Caco-2 (cell line): ENCODE measurements at regions of chr14 and their contacts with region 1.

Region 1: DNA sequence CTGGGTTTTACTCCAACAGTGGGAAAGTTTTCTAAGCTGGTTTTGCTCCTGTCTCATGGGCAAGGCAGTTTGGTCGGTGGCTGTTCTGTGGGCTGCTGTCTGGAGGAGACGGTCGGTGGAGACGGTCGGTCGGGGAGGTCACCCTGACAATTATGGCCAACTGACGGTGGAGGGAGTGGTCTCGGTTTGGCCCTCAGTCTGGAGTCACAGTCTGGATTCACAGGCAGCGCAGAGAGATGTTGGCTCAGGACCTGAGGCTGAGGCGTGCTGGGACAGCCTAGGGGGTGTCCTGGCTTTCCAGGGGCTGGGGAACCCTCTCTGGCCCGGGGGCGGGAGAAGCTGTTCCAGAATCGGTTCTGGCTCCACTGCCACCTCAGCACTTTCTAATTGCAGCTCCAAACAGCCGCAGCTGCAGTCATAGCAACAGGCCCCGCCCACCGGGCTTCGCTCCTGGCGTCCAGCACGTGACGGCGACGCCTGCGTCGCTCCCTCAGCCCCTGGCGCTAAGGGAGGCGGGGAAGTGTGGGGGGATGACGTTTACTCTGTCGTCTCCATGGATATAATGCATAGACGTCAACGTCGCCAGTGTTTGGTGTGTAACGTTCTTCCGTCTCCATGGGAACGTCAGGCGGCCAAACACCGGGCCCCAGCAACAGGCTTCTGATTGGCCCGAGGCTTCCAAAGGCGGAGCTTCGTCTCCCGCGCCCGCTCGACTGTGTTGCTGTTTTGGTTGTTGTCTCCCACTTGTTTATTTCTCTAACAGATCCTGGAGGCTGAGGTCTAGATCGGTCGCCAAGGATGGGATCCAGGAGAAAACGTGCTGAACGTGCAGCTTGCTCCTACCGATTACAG is 19.8 kb upstream of the FOS start:
- DNase-seq: peak; percentile 99
- H3K4me3 ChIP-seq: peak overlapping the region; percentile 57
- H3K4me3 Mint-ChIP-seq: peak overlapping the region; percentile 93
- H3K27ac Mint-ChIP-seq: peak overlapping the region; percentile 100
- H3K4me1 ChIP-seq: peaks cover 12% of the 10 kb centered on the region
- H3K4me1 Mint-ChIP-seq: peaks cover 8% of the 10 kb centered on the region
- H3K27me3 ChIP-seq: no peaks in the 10 kb centered on the region
- H3K27me3 Mint-ChIP-seq: no peaks in the 10 kb centered on the region
- CTCF ChIP-seq: no peak

Region 2: GRCh38 chr14:74867673-74868072 is 391.2 kb before region 1 on chr14:
- CTCF ChIA-PET with region 1: no interaction called
- POLR2A ChIA-PET with region 1: no interaction called
- intact Hi-C with region 1: no loop called
- DNase-seq: no peak
- H3K4me3 ChIP-seq: no peak overlapping the region
- H3K4me3 Mint-ChIP-seq: no peak overlapping the region
- H3K27ac Mint-ChIP-seq: no peak overlapping the region
- H3K4me1 ChIP-seq: no peaks in the 10 kb centered on the region
- H3K4me1 Mint-ChIP-seq: no peaks in the 10 kb centered on the region
- H3K27me3 ChIP-seq: no peaks in the 10 kb centered on the region; the same call in 1 of the 2 replicates
- H3K27me3 Mint-ChIP-seq: peaks cover 14% of the 10 kb centered on the region
- CTCF ChIP-seq: no peak

Region 3: DNA sequence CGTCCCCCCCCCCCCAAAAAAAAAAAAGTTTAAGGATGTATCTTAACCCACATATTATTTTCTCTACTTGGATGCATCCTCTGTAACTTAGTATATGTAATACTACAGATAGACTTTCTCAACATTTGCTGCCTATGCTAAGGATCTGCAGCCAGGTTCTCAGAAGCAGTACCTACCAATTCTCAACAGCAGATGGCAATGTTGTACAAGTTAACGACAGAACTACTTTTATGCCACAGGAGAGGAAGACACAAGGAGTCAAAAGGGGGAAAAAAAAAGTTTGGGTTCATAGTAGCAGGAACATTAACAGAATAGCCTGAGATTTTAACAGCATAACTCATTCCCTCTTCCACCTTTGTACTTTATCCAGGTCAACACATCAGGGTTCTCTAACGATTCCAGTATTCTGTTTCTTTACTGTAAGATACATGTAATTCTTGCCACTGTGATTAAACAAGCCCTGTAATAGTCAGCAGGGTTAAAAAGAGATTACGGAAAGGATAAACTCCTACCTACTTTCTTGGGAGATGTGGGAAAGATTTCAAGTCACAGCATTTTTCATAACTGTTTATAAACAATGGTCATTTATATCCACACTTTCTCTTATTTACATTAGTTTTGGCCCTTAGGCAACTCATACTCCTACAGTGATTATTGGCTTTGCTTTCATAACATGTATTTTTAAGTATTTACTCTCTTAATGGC is 126.3 kb before region 1 on chr14:
- CTCF ChIA-PET with region 1: no interaction called
- POLR2A ChIA-PET with region 1: no interaction called
- intact Hi-C with region 1: loop called (anchors 1 kb)
- DNase-seq: peak; percentile 62 to 80
- H3K4me3 ChIP-seq: no peak overlapping the region
- H3K4me3 Mint-ChIP-seq: no peak overlapping the region
- H3K27ac Mint-ChIP-seq: peak overlapping the region; percentile 51
- H3K4me1 ChIP-seq: 0 out of 2 replicates have a peak, but pooled peaks cover 7% of the 10 kb centered on the region
- H3K4me1 Mint-ChIP-seq: no peaks in the 10 kb centered on the region
- H3K27me3 ChIP-seq: no peaks in the 10 kb centered on the region
- H3K27me3 Mint-ChIP-seq: no peaks in the 10 kb centered on the region
- CTCF ChIP-seq: peak; percentile 62 to 75

Region 4: GRCh38 chr14:75182841-75183624 is 75.8 kb before region 1 on chr14:
- CTCF ChIA-PET with region 1: interaction called, 3 read pairs
- POLR2A ChIA-PET with region 1: interaction called, 12 read pairs
- intact Hi-C with region 1: loop called (anchors 2 kb)
- DNase-seq: peak; percentile 68 to 69
- H3K4me3 ChIP-seq: no peak overlapping the region
- H3K4me3 Mint-ChIP-seq: peak overlapping the region; percentile 27
- H3K27ac Mint-ChIP-seq: peak overlapping the region; percentile 81
- H3K4me1 ChIP-seq: peaks cover 32% of the 10 kb centered on the region
- H3K4me1 Mint-ChIP-seq: peaks cover 14% of the 10 kb centered on the region
- H3K27me3 ChIP-seq: no peaks in the 10 kb centered on the region
- H3K27me3 Mint-ChIP-seq: no peaks in the 10 kb centered on the region
- CTCF ChIP-seq: no peak

Region 5: GRCh38 chr14:75230140-75231045 is 28.4 kb before region 1 on chr14:
- CTCF ChIA-PET with region 1: no interaction called
- POLR2A ChIA-PET with region 1: interaction called, 5 read pairs
- intact Hi-C with region 1: loop called (anchors 2 kb)
- DNase-seq: no peak
- H3K4me3 ChIP-seq: no peak overlapping the region
- H3K4me3 Mint-ChIP-seq: no peak overlapping the region
- H3K27ac Mint-ChIP-seq: peak overlapping the region; percentile 9
- H3K4me1 ChIP-seq: peaks cover 33% of the 10 kb centered on the region
- H3K4me1 Mint-ChIP-seq: peaks cover 36% of the 10 kb centered on the region
- H3K27me3 ChIP-seq: no peaks in the 10 kb centered on the region
- H3K27me3 Mint-ChIP-seq: no peaks in the 10 kb centered on the region
- CTCF ChIP-seq: peak in 1 of 2 experiments; percentile 22

Region 6: GRCh38 chr14:75238756-75239455 is 19.9 kb before region 1 on chr14:
- CTCF ChIA-PET with region 1: interaction called, 12 read pairs
- POLR2A ChIA-PET with region 1: interaction called, 5 read pairs
- intact Hi-C with region 1: loop called (anchors 2 kb)
- DNase-seq: no peak
- H3K4me3 ChIP-seq: no peak overlapping the region
- H3K4me3 Mint-ChIP-seq: no peak overlapping the region
- H3K27ac Mint-ChIP-seq: no peak overlapping the region
- H3K4me1 ChIP-seq: peaks cover 5% of the 10 kb centered on the region
- H3K4me1 Mint-ChIP-seq: peaks cover 15% of the 10 kb centered on the region
- H3K27me3 ChIP-seq: no peaks in the 10 kb centered on the region
- H3K27me3 Mint-ChIP-seq: no peaks in the 10 kb centered on the region
- CTCF ChIP-seq: no peak

Region 7: DNA sequence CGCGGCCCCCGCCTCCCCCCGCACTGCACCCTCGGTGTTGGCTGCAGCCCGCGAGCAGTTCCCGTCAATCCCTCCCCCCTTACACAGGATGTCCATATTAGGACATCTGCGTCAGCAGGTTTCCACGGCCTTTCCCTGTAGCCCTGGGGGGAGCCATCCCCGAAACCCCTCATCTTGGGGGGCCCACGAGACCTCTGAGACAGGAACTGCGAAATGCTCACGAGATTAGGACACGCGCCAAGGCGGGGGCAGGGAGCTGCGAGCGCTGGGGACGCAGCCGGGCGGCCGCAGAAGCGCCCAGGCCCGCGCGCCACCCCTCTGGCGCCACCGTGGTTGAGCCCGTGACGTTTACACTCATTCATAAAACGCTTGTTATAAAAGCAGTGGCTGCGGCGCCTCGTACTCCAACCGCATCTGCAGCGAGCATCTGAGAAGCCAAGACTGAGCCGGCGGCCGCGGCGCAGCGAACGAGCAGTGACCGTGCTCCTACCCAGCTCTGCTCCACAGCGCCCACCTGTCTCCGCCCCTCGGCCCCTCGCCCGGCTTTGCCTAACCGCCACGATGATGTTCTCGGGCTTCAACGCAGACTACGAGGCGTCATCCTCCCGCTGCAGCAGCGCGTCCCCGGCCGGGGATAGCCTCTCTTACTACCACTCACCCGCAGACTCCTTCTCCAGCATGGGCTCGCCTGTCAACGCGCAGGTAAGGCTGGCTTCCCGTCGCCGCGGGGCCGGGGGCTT is 19.8 kb after region 1 on chr14 and contains the start of gene FOS:
- CTCF ChIA-PET with region 1: interaction called, 6 read pairs
- POLR2A ChIA-PET with region 1: interaction called, 22 read pairs
- intact Hi-C with region 1: loop called (anchors 1 kb)
- DNase-seq: peak; percentile 92 to 95
- H3K4me3 ChIP-seq: peak within 1 kb of the TSS; percentile 96
- H3K4me3 Mint-ChIP-seq: peak within 1 kb of the TSS; percentile 89
- H3K27ac Mint-ChIP-seq: peak within 1 kb of the TSS; percentile 99
- H3K4me1 ChIP-seq: peaks cover 23% of the 10 kb centered on the region
- H3K4me1 Mint-ChIP-seq: peaks cover 14% of the 10 kb centered on the region
- H3K27me3 ChIP-seq: no peaks in the 10 kb centered on the region
- H3K27me3 Mint-ChIP-seq: no peaks in the 10 kb centered on the region
- CTCF ChIP-seq: no peak
- total RNA-seq, gene FOS: 72.7 and 73.7 TPM in 2 replicates

Region 8: DNA sequence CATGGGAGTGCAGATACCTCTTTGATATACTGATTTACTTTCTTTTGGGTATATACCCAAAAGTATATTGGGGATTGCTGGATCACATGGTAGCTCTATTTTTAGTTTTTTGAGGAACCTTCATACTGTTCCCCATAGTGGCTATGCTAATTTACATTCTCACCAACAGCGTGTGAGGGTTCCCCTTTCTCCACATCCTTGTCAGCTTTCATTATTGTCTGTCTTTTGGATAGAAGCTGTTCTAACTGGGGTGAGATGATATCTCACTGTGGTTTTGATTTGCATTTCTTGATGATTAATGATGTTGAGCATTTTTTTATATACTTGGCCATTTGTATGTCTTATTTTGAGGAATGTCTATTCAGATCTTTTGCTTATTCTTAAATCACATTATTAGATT is 124.9 kb after region 1 on chr14:
- CTCF ChIA-PET with region 1: no interaction called
- POLR2A ChIA-PET with region 1: no interaction called
- intact Hi-C with region 1: no loop called
- DNase-seq: no peak
- H3K4me3 ChIP-seq: no peak overlapping the region
- H3K4me3 Mint-ChIP-seq: no peak overlapping the region
- H3K27ac Mint-ChIP-seq: no peak overlapping the region
- H3K4me1 ChIP-seq: peaks cover 23% of the 10 kb centered on the region
- H3K4me1 Mint-ChIP-seq: peaks cover 15% of the 10 kb centered on the region
- H3K27me3 ChIP-seq: no peaks in the 10 kb centered on the region
- H3K27me3 Mint-ChIP-seq: no peaks in the 10 kb centered on the region
- CTCF ChIP-seq: no peak